Mammary epithelial cell (primary cell): ENCODE measurements at regions of chr4 and their contacts with region 1.

Region 1: DNA sequence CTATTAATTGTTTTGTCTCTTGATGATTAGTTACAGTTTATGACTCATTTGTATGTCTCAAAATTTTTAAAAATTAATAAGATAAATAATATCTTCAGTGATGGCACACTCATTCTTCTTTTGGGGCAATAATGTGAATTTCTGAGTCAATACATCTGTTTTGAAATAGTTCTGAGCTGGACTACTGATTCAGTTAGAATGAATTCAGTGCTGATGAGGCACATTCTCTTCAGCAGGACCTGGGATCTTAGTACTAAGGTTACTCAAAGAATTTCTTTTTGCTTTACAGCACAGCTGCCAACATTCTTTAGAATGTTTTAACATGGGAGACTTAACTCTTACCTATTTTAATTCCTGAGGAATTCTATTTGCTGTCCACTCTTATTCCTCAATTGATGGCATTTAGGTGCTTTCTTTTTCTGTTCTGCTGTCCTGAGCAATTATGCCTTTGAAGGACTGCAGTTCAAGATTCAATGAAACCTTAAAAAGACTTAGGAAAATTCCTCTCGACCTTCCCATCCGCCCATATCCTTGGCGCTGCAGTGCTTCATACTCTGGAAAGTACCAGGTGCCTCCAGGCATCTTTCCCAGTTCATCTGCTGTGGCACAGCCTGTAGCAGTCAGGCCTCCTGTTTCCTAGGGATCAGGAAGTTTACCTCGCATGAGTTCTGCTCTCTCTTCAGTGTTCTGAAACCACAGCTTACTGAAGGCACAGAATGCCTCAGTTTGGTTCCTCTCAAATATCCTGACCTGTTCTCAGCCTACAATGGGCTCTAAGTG is 213.7 kb downstream of the FSTL5 start:
- DNase-seq: peak; percentile 40
- H3K4me3 ChIP-seq: no peak overlapping the region
- H3K27ac ChIP-seq: no peak overlapping the region
- H3K4me1 ChIP-seq: peaks cover 5% of the 10 kb centered on the region
- H3K27me3 ChIP-seq: no peaks in the 10 kb centered on the region
- CTCF ChIP-seq: no peak

Region 2: DNA sequence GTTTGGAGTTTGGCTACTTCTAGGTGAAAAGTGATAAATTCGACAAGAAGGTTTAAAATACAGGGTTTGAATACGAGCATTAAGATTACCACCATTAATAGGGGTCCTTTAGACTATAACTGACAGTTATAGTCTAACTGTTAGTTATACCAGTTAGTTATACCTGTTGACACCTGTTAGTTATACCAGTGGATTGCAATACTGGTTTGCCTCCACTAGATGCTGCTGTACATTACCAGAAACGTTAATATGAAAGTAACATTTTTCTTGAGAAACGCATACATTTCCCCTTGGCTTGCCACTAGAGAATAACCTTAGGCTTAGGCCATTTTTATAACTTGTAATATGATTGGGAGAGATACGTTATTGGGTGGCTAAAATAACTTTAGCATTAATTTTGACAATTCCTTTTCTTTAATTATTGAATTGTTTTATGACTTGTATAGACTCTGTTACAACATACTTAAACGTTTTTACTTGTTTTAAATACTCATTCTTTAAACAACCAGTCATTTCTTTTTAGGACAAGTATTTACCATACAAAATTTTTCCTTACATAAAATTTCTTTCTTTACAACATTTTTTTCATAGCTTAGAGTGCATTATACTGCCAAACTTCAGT is 697.5 kb before region 1 on chr4:
- CTCF ChIA-PET with region 1: no interaction called
- dilution Hi-C with region 1: no loop called
- in situ Hi-C with region 1: no loop called
- intact Hi-C with region 1: loop called (anchors 5 kb)
- DNase-seq: peak; percentile 29
- H3K4me3 ChIP-seq: no peak overlapping the region
- H3K27ac ChIP-seq: no peak overlapping the region
- H3K4me1 ChIP-seq: no peaks in the 10 kb centered on the region
- H3K27me3 ChIP-seq: no peaks in the 10 kb centered on the region
- CTCF ChIP-seq: peak; percentile 92 to 94

Region 3: GRCh38 chr4:161564230-161564834 is 385.8 kb before region 1 on chr4:
- CTCF ChIA-PET with region 1: interaction called, 3 read pairs
- dilution Hi-C with region 1: no loop called
- in situ Hi-C with region 1: no loop called
- intact Hi-C with region 1: loop called (anchors 2 kb)
- DNase-seq: no peak
- H3K4me3 ChIP-seq: no peak overlapping the region
- H3K27ac ChIP-seq: no peak overlapping the region
- H3K4me1 ChIP-seq: peaks cover 7% of the 10 kb centered on the region
- H3K27me3 ChIP-seq: no peaks in the 10 kb centered on the region
- CTCF ChIP-seq: peak; percentile 35 to 41

Region 4: DNA sequence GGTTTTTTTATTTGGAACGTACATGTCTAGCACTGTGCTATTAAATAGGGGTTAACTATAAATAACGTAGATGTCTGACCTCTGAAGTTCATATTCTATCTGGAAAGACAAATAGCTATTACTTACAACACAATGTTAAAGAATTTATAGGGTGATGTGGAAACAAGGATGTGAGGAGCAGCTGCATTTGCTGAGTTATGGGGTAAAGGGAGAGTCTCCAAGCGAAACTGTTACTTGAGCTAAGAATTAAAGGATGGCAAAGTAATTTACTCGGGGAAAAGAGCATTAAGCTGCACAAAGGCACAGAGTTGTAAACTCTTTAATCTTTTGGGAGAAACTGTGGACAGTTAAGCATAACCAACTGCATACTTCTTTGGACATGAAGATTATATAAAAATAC is 96.0 kb after region 1 on chr4:
- CTCF ChIA-PET with region 1: no interaction called
- dilution Hi-C with region 1: no loop called
- in situ Hi-C with region 1: no loop called
- intact Hi-C with region 1: no loop called
- DNase-seq: no peak
- H3K4me3 ChIP-seq: no peak overlapping the region
- H3K27ac ChIP-seq: no peak overlapping the region
- H3K4me1 ChIP-seq: no peaks in the 10 kb centered on the region
- H3K27me3 ChIP-seq: no peaks in the 10 kb centered on the region
- CTCF ChIP-seq: no peak

Region 5: GRCh38 chr4:162056990-162057389 is 106.9 kb after region 1 on chr4:
- CTCF ChIA-PET with region 1: no interaction called
- dilution Hi-C with region 1: no loop called
- in situ Hi-C with region 1: no loop called
- intact Hi-C with region 1: no loop called
- DNase-seq: no peak
- H3K4me3 ChIP-seq: no peak overlapping the region
- H3K27ac ChIP-seq: no peak overlapping the region
- H3K4me1 ChIP-seq: no peaks in the 10 kb centered on the region
- H3K27me3 ChIP-seq: no peaks in the 10 kb centered on the region
- CTCF ChIP-seq: no peak